Pancreas (tissue), 10 donors: ENCODE measurements at regions of chr19 and their contacts with region 1.

Region 1: DNA sequence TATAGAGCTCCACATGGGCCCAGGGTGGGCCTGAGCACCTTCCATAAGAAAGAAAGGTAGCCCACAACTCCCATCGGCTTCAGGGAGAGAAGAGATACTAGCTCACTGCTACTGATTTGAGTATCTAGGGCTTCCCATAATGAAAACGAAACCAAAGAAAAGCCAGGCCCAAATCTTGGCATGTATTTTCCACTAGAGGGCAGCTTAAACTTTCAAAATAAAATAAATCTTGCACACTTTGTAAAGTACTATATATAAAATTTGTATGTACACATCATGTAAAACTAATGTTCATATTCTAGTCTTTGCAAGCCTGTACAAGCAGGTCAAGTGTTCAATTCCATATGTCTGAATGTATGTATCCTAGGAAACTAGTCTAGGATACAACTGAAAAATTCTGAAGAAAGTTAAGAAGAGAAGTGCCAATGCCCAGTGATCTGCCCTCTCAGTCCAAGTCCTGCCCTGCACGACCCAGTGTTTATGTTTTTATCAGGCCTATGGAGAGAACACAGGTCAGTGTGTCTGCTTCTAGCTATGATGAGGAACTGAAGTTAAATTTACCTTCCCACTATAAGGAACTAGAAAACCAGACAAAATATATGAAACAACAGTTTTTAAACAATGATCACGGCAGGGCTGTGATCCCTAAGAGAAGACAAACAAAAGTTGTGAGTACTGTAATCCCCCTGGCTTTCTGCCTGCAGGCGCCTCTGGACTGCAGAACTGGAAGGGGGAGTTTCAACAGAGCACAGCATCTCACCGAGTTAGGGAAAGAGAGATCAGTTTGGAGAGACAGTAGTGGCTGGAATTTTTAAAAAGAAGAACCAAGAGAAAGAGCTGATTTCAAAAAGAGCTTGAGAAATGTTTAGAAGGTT is 475.7 kb downstream of the UQCRFS1 start:
- DNase-seq: peak in 1 of 6 donors; percentile 17
- ATAC-seq: peak in 3 of 4 donors; percentile 65 to 85 (median 78)
- H3K4me3 ChIP-seq: no peak overlapping the region
- H3K27ac ChIP-seq: no peak overlapping the region
- H3K4me1 ChIP-seq: no peaks in the 10 kb centered on the region
- H3K27me3 ChIP-seq: no peaks in the 10 kb centered on the region
- CTCF ChIP-seq: peak in 3 of 4 donors; percentile 36 to 58 (median 48)

Region 2: GRCh38 chr19:28644169-28644775 is 93.0 kb before region 1 on chr19:
- intact Hi-C with region 1: no loop called
- DNase-seq: peak in 1 of 6 donors; percentile 25
- ATAC-seq: peak; percentile 52 to 81 (median 68)
- H3K4me3 ChIP-seq: peak overlapping the region in 1 of 4 donors; percentile 13
- H3K27ac ChIP-seq: peak overlapping the region in 3 of 4 donors; percentile 0 to 63 (median 54)
- H3K4me1 ChIP-seq: no peaks in the 10 kb centered on the region
- H3K27me3 ChIP-seq: no peaks in the 10 kb centered on the region
- CTCF ChIP-seq: no peak

Region 3: DNA sequence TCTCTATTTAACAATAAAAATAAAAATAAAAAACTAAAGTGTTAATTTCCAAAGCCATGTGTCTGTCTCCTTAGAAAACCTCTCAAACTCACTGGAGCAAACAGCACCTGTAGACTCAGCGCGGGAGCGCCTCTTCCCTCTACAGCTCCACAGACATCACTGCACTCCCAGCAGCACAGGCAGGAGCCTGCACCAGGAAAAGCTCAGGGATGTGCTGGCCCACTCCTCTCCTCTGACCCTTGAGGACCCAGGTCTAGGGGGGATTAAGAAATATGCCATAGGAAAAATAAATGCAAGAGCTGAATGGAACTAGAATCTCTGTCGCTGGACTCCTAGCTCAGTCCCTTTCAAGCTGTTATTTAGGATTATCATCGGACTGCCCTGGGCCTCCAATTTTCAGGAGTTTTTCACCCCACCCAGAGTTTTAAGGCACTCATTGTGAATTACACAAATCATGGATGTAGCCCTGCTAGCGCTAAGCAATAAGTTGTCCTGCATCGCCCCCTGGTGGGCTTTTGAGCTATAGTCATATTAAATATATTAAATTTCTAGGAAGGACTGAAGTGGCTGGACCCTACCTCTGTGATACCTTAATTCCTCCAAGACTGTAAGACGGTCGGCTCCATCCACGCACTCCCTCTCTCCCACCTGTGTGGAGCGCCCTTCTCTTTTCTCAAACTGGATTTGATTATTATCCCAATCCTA is 141.8 kb after region 1 on chr19:
- intact Hi-C with region 1: loop called in 2 of 3 experiments (anchors 2 to 5 kb)
- DNase-seq: peak in 5 of 6 donors; percentile 40 to 85 (median 67)
- ATAC-seq: peak; percentile 43 to 89 (median 76)
- H3K4me3 ChIP-seq: no peak overlapping the region
- H3K27ac ChIP-seq: no peak overlapping the region
- H3K4me1 ChIP-seq: no peaks in the 10 kb centered on the region
- H3K27me3 ChIP-seq: no peaks in the 10 kb centered on the region
- CTCF ChIP-seq: peak; percentile 36 to 74 (median 54)

Region 4: GRCh38 chr19:29259153-29259552 is 521.9 kb after region 1 on chr19:
- intact Hi-C with region 1: loop called in 1 of 3 experiments (anchors 5 kb)
- DNase-seq: no peak
- ATAC-seq: no peak
- H3K4me3 ChIP-seq: no peak overlapping the region
- H3K27ac ChIP-seq: no peak overlapping the region
- H3K4me1 ChIP-seq: no peaks in the 10 kb centered on the region
- H3K27me3 ChIP-seq: no peaks in the 10 kb centered on the region
- CTCF ChIP-seq: no peak